Gastrocnemius medialis (tissue), 4 donors: ENCODE measurements at regions of chr2 and their contacts with region 1.

Region 1: GRCh38 chr2:219160186-219161017 is at the start of gene NHEJ1:
- DNase-seq: peak; percentile 95 to 97
- ATAC-seq: peak; percentile 96
- H3K4me3 ChIP-seq: peak within 1 kb of the TSS; percentile 67 to 96 (median 78)
- H3K27ac ChIP-seq: peak within 1 kb of the TSS; percentile 98 to 100 (median 98)
- H3K4me1 ChIP-seq: peaks cover 9 to 11% of the 10 kb centered on the region in 2 donors
- H3K27me3 ChIP-seq: no peaks in the 10 kb centered on the region
- CTCF ChIP-seq: peak; percentile 94 to 100 (median 99)
- POLR2A ChIP-seq: peak; percentile 72
- total RNA-seq, gene NHEJ1: 24.5 to 39.0 (median 26.4) TPM

Region 2: GRCh38 chr2:218568190-218569037 is 592.0 kb before region 1 on chr2 and contains the starts of genes CNOT9 and USP37:
- in situ Hi-C with region 1: no loop called
- intact Hi-C with region 1: loop called (anchors 1 kb)
- DNase-seq: peak; percentile 99
- ATAC-seq: peak; percentile 89 to 95
- H3K4me3 ChIP-seq: peak within 1 kb of the TSS; percentile 77 to 90 (median 78)
- H3K27ac ChIP-seq: peak within 1 kb of the TSS; percentile 94 to 96 (median 96)
- H3K4me1 ChIP-seq: peaks cover 31 to 44% of the 10 kb centered on the region in 2 donors
- H3K27me3 ChIP-seq: no peaks in the 10 kb centered on the region
- CTCF ChIP-seq: no peak
- POLR2A ChIP-seq: peak; percentile 75
- total RNA-seq, gene CNOT9: 10.4 to 28.4 (median 20.5) TPM
- total RNA-seq, gene USP37: 7.0 to 12.4 (median 8.0) TPM

Region 3: DNA sequence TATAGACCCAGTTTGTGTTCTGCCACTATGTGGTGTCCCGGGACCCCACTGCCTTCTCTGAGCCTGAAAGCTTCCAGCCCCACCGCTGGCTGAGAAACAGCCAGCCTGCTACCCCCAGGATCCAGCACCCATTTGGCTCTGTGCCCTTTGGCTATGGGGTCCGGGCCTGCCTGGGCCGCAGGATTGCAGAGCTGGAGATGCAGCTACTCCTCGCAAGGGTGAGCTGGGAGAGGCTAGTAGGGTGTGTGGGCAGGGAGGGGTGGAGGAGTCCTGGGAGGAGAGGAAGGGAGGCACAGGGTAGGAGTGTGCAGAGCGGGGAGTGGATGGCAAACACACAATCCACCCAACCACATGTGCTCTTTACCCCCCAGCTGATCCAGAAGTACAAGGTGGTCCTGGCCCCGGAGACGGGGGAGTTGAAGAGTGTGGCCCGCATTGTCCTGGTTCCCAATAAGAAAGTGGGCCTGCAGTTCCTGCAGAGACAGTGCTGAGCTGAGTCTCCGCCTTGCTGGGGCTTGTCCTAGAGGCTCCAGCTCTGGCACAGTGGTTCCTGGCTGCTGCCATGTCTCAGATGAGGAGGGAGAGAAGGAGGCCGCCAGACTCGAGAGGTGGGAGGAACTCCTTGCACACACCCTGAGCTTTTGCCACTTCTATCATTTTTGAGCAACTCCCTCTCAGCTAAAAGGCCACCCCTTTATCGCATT is 345.7 kb before region 1 on chr2:
- in situ Hi-C with region 1: no loop called
- intact Hi-C with region 1: no loop called
- DNase-seq: peak in 1 of 2 donors; percentile 19
- ATAC-seq: no peak
- H3K4me3 ChIP-seq: no peak overlapping the region
- H3K27ac ChIP-seq: peak overlapping the region; percentile 95
- H3K4me1 ChIP-seq: peaks cover 6 to 22% of the 10 kb centered on the region in 2 donors
- H3K27me3 ChIP-seq: no peaks in the 10 kb centered on the region
- CTCF ChIP-seq: no peak
- POLR2A ChIP-seq: no peak

Region 4: GRCh38 chr2:218995972-218996711 is 164.3 kb before region 1 on chr2:
- in situ Hi-C with region 1: no loop called
- intact Hi-C with region 1: loop called (anchors 1 kb)
- DNase-seq: peak; percentile 53 to 66
- ATAC-seq: peak; percentile 65 to 83
- H3K4me3 ChIP-seq: peak overlapping the region; percentile 39 to 53 (median 51)
- H3K27ac ChIP-seq: peak overlapping the region in 2 of 4 donors; percentile 62 to 81
- H3K4me1 ChIP-seq: peaks cover 10 to 18% of the 10 kb centered on the region in 2 donors
- H3K27me3 ChIP-seq: peaks cover 48 to 64% (median 54%) of the 10 kb centered on the region in 3 donors
- CTCF ChIP-seq: peak; percentile 59 to 96 (median 87)
- POLR2A ChIP-seq: peak; percentile 68 to 86

Region 5: DNA sequence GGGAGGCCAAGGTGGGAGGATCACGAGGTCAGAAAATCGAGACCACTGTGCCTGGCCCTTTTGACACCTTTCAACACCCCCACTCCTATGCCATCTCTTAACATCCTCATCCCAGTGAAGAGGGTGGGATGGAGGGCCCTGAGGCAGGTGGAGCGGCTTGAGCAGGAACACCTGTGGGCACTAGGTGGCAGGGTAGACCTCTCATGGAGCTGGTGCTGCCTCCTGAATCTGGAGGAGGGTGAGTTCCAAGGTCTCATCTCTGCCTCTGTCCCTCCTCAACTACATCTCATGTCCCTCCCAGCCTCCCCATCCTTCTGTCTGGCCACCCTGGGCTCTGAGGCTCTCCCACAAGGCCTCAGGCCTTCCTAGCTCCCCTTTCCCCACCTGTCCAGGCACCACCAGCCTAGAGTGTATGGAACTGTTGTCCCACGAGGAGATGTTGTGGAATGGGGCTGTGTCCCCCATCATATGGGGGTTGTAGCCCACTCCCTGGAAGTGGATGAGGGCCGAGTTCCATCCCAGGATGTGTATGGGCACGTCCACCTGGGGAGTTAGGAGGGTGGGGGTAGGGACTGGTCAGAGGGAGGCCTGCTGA is 150.1 kb before region 1 on chr2:
- in situ Hi-C with region 1: no loop called
- intact Hi-C with region 1: no loop called
- DNase-seq: no peak
- ATAC-seq: no peak
- H3K4me3 ChIP-seq: no peak overlapping the region
- H3K27ac ChIP-seq: no peak overlapping the region
- H3K4me1 ChIP-seq: no peaks in the 10 kb centered on the region
- H3K27me3 ChIP-seq: peaks cover 9 to 16% (median 15%) of the 10 kb centered on the region in 3 donors
- CTCF ChIP-seq: no peak
- POLR2A ChIP-seq: no peak

Region 6: DNA sequence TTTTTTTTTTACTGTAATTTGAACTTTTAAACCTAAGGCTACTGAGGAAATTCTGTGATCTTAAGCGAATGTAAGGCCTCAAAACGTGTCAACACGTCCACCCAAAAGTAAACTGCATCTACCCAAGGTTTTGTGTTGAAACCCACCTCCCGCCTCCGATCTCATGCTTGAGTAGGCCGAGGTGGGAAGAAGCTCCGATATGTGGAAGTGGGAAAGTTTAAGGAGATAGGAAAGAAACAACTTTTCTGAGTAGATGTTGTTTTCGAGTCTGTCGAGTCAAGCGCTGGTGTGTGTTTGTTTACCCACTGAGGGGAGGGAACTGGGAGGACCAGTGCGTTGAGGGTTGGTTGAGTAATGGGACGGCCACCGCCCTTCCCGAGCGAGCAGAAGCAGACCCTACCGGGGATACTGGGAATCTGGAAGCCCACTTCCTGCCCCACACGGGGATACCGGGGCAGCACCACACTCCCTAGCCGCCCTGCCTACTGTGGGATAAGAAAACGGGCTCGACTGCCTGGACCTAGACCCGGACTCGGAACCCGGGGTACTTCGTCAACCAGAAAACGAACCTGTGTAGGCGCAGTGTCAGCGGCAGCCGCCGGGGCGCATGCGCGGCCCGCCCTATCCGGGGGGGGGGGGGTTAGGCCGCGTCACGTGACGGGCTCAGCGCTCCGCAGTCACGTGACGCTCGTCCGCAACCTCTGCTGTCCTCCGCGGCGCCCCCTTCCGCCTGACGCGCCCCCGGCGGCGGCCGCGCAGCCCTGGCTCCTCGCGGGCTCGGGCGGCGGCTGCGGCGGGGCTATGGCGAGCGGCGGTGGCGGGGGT is 17.4 kb after region 1 on chr2 and contains the start of gene RETREG2:
- in situ Hi-C with region 1: no loop called
- intact Hi-C with region 1: loop called (anchors 1 kb)
- DNase-seq: peak; percentile 86 to 89
- ATAC-seq: peak; percentile 85 to 90
- H3K4me3 ChIP-seq: peak within 1 kb of the TSS; percentile 87 to 96 (median 95)
- H3K27ac ChIP-seq: peak within 1 kb of the TSS; percentile 94 to 99 (median 99)
- H3K4me1 ChIP-seq: peaks cover 17 to 21% of the 10 kb centered on the region in 2 donors
- H3K27me3 ChIP-seq: no peaks in the 10 kb centered on the region
- CTCF ChIP-seq: peak; percentile 25 to 72 (median 66)
- POLR2A ChIP-seq: peak; percentile 96 to 99
- total RNA-seq, gene RETREG2: 39.8 to 57.2 (median 44.9) TPM

Region 7: GRCh38 chr2:219229305-219230058 is 69.1 kb after region 1 on chr2 and contains the starts of genes ANKZF1 and ATG9A:
- in situ Hi-C with region 1: no loop called
- intact Hi-C with region 1: loop called (anchors 1 kb)
- DNase-seq: peak; percentile 99 to 100
- ATAC-seq: peak; percentile 96 to 98
- H3K4me3 ChIP-seq: peak within 1 kb of the TSS; percentile 73 to 95 (median 90)
- H3K27ac ChIP-seq: peak within 1 kb of the TSS; percentile 85 to 99 (median 90)
- H3K4me1 ChIP-seq: peaks cover 22 to 27% of the 10 kb centered on the region in 2 donors
- H3K27me3 ChIP-seq: no peaks in the 10 kb centered on the region
- CTCF ChIP-seq: peak in 1 of 5 experiments; percentile 17
- POLR2A ChIP-seq: peak; percentile 93 to 95
- total RNA-seq, gene ANKZF1: 13.0 to 23.0 (median 19.1) TPM
- total RNA-seq, gene ATG9A: 111 to 208 (median 176) TPM

Region 8: GRCh38 chr2:219294356-219295351 is 134.3 kb after region 1 on chr2:
- in situ Hi-C with region 1: loop called (anchors 5 to 25 kb)
- intact Hi-C with region 1: loop called (anchors 1 kb)
- DNase-seq: peak; percentile 64 to 80
- ATAC-seq: peak; percentile 85 to 86
- H3K4me3 ChIP-seq: peak overlapping the region; percentile 57 to 63 (median 58)
- H3K27ac ChIP-seq: peak overlapping the region; percentile 68 to 82 (median 77)
- H3K4me1 ChIP-seq: peaks cover 8 to 10% of the 10 kb centered on the region in 2 donors
- H3K27me3 ChIP-seq: no peaks in the 10 kb centered on the region
- CTCF ChIP-seq: peak; percentile 95 to 99 (median 98)
- POLR2A ChIP-seq: peak in 1 of 2 donors; percentile 30